ENCODE measurements at regions of chr20 and their contacts with region 1.

Region 1: GRCh38 chr20:22684072-22684762 is 99.8 kb upstream of the FOXA2 start:
- DNase-seq: peak; percentile 84
- ATAC-seq: peak; percentile 91
- H3K4me3 ChIP-seq: no peak overlapping the region
- H3K27ac ChIP-seq: no peak overlapping the region
- H3K4me1 ChIP-seq: peaks cover 18% of the 10 kb centered on the region
- H3K27me3 ChIP-seq: peaks cover 0 to 3% of the 10 kb centered on the region in 2 experiments; a peak in 1 of 5 replicates
- CTCF ChIP-seq: peak; percentile 98
- EP300 ChIP-seq: no peak
- POLR2A ChIP-seq: no peak
- RAD21 ChIP-seq: peak; percentile 99

Region 2: DNA sequence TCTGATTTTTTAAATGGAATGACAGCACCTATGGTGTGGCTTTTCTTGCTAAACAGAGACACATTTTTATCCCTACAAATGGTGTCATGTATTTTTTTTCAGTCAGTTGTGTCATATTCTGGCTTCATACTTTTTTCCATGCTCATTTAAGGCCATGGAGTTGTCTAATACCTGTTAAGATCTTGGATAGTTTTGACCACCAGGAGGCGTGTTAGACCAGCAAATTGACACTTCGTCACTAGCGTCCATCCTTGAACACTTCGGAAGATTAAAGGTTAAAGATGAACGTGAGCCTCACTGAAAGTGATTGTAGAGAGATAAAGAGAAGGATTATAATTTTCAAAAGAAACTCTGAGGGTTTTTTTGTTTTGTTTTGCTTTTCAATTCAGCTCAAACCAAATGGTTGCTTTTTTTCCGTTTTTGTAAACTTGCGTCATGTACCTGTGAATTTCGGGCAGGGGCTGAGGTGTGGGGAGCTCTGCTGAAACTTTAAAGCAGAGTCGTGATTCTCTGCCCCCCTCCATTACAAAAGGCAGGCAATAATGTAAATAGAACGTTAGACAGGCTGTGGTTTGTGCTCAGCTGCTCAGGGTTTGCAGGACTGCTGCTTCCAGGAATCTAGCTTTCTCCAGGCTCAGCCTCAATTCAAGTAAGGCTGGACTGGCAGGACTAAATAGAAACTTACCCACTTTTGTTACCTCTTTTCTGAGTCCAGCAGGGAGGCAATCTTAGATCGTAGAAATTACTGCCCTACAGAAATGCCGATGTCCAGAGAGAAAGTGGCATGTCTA is 344.9 kb before region 1 on chr20:
- CTCF ChIA-PET with region 1: interaction called, 231 read pairs
- POLR2A ChIA-PET with region 1: no interaction called
- in situ Hi-C with region 1: loop called (anchors 5 kb)
- intact Hi-C with region 1: loop called (anchors 1 kb)
- DNase-seq: peak; percentile 84
- ATAC-seq: peak; percentile 77
- H3K4me3 ChIP-seq: no peak overlapping the region
- H3K27ac ChIP-seq: no peak overlapping the region
- H3K4me1 ChIP-seq: peaks cover 5% of the 10 kb centered on the region; the same call in 1 of the 2 replicates
- H3K27me3 ChIP-seq: peaks cover 0 to 9% of the 10 kb centered on the region in 2 experiments; a peak in 1 of 5 replicates
- CTCF ChIP-seq: peak; percentile 96
- EP300 ChIP-seq: no peak
- POLR2A ChIP-seq: no peak
- RAD21 ChIP-seq: peak; percentile 95

Region 3: GRCh38 chr20:22453239-22454080 is 230.8 kb before region 1 on chr20:
- CTCF ChIA-PET with region 1: interaction called, 18 read pairs
- POLR2A ChIA-PET with region 1: no interaction called
- in situ Hi-C with region 1: loop called (anchors 5 kb)
- intact Hi-C with region 1: loop called (anchors 1 kb)
- DNase-seq: peak; percentile 70
- ATAC-seq: peak; percentile 60; the same call in 2 of the 3 replicates
- H3K4me3 ChIP-seq: no peak overlapping the region
- H3K27ac ChIP-seq: no peak overlapping the region
- H3K4me1 ChIP-seq: peaks cover 27% of the 10 kb centered on the region
- H3K27me3 ChIP-seq: peaks cover 6 to 60% of the 10 kb centered on the region in 2 experiments
- CTCF ChIP-seq: peak; percentile 86
- EP300 ChIP-seq: no peak
- POLR2A ChIP-seq: no peak
- RAD21 ChIP-seq: peak; percentile 80

Region 4: GRCh38 chr20:22490287-22491193 is 193.7 kb before region 1 on chr20:
- CTCF ChIA-PET with region 1: no interaction called
- POLR2A ChIA-PET with region 1: no interaction called
- in situ Hi-C with region 1: no loop called
- intact Hi-C with region 1: loop called (anchors 1 kb)
- DNase-seq: peak; percentile 100
- ATAC-seq: peak; percentile 99
- H3K4me3 ChIP-seq: peak overlapping the region; percentile 41 to 61 (median 59)
- H3K27ac ChIP-seq: peak overlapping the region; percentile 84
- H3K4me1 ChIP-seq: peaks cover 47% of the 10 kb centered on the region
- H3K27me3 ChIP-seq: no peaks in the 10 kb centered on the region
- CTCF ChIP-seq: peak; percentile 81
- EP300 ChIP-seq: peak; percentile 81 to 92
- POLR2A ChIP-seq: peak; percentile 58 to 75
- RAD21 ChIP-seq: peak; percentile 79

Measured in HepG2 (cell line).